ENCODE measurements at regions of chr17 and their contacts with region 1.

Region 1: DNA sequence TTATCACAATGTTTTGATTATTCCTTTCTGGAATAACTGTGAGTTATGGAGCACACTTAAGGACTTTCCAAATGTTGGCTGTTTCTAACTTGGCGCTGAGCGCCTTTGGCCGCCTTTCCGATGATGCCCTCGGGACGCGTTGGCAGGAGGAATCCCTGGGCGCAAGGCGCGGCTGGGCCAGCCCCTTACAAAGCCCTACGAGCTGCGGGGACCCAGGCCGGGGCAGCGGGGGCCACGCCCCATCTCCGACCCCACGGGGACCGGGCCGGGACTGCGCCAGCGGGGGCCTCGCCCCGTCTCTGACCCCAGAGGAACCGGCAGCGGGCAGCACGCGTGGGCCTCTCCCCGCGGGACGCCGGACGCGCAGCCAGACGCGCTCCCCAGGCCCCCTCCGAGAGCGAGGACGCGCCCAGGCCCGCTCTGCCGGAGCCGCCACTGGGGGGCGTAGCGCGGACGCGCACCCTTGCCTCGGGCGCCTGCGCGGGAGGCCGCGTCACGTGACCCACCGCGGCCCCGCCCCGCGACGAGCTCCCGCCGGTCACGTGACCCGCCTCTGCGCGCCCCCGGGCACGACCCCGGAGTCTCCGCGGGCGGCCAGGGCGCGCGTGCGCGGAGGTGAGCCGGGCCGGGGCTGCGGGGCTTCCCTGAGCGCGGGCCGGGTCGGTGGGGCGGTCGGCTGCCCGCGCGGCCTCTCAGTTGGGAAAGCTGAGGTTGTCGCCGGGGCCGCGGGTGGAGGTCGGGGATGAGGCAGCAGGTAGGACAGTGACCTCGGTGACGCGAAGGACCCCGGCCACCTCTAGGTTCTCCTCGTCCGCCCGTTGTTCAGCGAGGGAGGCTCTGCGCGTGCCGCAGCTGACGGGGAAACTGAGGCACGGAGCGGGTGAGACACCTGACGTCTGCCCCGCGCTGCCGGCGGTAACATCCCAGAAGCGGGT is at the start of gene GAA:
- DNase-seq: peak; percentile 99

Region 2: DNA sequence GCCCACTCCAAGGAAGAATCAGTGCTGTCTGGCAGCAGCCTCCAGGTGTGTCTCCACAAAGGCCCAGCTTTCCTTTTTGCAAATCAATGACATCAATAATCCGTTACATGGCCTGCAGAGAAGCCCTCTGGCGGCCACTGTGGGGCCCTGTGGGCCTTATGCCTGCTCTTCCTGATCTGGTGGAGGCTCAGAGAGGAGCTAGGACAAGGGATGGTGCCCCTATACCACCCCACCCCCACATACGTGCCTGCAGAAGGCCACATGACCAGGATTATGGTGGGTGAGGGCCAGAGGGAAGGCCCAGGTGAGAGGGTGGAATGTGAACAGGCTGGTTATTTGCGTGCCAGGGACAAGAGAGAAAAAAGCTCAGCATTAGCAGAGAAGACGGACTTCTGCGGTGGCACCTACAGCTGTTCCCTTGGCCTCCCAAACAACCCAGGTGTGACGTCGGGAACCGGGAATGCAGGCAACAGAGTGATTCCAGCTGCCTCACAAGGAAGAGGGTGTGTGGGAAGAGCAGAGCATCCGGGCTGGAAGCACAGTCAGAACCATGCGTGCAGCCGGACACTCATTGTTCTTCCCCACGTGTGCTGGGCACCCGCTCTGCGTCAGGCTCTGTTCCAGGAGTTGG is 23.2 kb after region 1 on chr17:
- CTCF ChIA-PET with region 1: interaction called, 8 read pairs
- POLR2A ChIA-PET with region 1: interaction called, 51 read pairs
- DNase-seq: peak; percentile 51

Region 3: DNA sequence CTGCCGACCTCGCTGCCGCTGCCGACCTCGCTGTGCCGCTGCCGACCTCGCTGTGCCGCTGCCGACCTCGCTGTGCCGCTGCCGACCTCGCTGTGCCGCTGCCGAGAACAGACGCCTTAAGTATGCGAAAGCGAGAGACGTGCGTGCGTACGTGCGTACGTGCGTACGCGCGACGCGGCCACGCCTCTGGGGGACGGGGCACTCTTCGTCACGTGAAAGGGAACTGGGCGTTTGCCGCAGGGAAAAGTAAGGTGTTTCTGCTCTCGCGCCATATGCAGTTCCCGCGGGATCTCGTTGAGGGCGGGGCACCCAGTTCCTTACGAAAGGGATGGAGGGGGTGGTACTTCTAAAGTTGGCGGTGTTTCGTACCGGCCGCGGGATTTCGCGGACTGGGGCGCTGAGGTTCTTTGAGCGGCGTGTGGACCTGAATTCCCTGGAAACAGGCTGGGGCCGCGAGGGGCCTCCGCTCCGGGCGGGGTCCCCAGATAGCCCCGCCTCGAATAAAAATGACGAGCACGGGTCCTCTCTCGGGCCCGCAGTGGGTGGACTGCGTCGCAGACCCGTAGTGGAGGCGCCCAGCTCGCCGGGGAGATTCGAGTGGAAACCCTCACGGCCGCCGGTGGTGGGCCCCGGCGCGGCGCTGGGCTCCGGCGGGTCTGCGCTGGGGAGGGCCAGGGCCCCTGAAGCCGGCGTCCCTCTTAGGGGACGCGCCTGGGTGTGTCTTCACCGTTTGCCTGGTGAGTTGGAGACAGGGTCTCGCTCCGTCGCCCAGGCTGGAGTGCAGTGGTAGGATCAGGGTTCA is 46.0 kb after region 1 on chr17 and contains the start of gene EIF4A3:
- CTCF ChIA-PET with region 1: interaction called, 4 read pairs
- POLR2A ChIA-PET with region 1: interaction called, 16 read pairs
- DNase-seq: peak; percentile 99